Activated naive CD4-positive, alpha-beta T cell treated with anti-CD3 and anti-CD28 coated beads for 36 hours (primary cell): ENCODE measurements at regions of chr6 and their contacts with region 1.

Region 1: GRCh38 chr6:7154341-7155139 is 46.8 kb downstream of the RREB1 start:
- DNase-seq: peak; percentile 36
- H3K4me3 Mint-ChIP-seq: peak overlapping the region; percentile 19
- H3K27ac Mint-ChIP-seq: peak overlapping the region; percentile 65
- H3K4me1 Mint-ChIP-seq: peaks cover 85% of the 10 kb centered on the region
- H3K27me3 Mint-ChIP-seq: no peaks in the 10 kb centered on the region

Region 2: DNA sequence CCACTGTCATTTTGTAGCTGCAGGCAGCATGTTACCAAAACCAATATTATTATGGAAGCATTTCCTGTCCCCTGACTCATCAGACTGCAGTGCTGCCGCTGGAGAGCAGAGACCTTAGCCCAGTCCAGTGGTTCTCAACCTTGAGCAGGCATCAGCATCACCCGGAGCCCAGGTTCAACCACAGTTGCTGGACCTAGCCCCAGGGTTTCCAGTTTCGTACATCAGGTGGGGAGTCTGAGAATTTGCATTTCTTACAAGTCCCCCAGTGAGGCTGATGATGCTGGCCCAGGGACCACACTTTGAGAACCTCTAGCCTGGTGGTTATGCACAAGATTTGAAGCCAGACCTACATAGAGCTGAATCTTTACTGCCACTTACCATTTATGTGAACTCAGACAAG is 518.7 kb before region 1 on chr6:
- CTCF ChIA-PET with region 1: no interaction called
- intact Hi-C with region 1: no loop called
- DNase-seq: no peak
- H3K4me3 Mint-ChIP-seq: no peak overlapping the region
- H3K27ac Mint-ChIP-seq: no peak overlapping the region
- H3K4me1 Mint-ChIP-seq: peaks cover 21% of the 10 kb centered on the region
- H3K27me3 Mint-ChIP-seq: no peaks in the 10 kb centered on the region

Region 3: GRCh38 chr6:7086488-7086887 is 68.1 kb before region 1 on chr6:
- CTCF ChIA-PET with region 1: no interaction called
- intact Hi-C with region 1: loop called (anchors 1 kb)
- DNase-seq: peak; percentile 65
- H3K4me3 Mint-ChIP-seq: peak overlapping the region; percentile 17
- H3K27ac Mint-ChIP-seq: no peak overlapping the region
- H3K4me1 Mint-ChIP-seq: peaks cover 29% of the 10 kb centered on the region
- H3K27me3 Mint-ChIP-seq: no peaks in the 10 kb centered on the region

Region 4: GRCh38 chr6:7112741-7113313 is 41.7 kb before region 1 on chr6:
- CTCF ChIA-PET with region 1: interaction called, 5 read pairs
- intact Hi-C with region 1: loop called (anchors 1 kb)
- DNase-seq: peak; percentile 72
- H3K4me3 Mint-ChIP-seq: peak overlapping the region; percentile 73
- H3K27ac Mint-ChIP-seq: peak overlapping the region; percentile 51
- H3K4me1 Mint-ChIP-seq: peaks cover 74% of the 10 kb centered on the region
- H3K27me3 Mint-ChIP-seq: no peaks in the 10 kb centered on the region

Region 5: GRCh38 chr6:7129358-7129757 is 25.2 kb before region 1 on chr6:
- CTCF ChIA-PET with region 1: no interaction called
- intact Hi-C with region 1: no loop called
- DNase-seq: peak; percentile 27
- H3K4me3 Mint-ChIP-seq: no peak overlapping the region
- H3K27ac Mint-ChIP-seq: peak overlapping the region; percentile 50
- H3K4me1 Mint-ChIP-seq: peaks cover 82% of the 10 kb centered on the region
- H3K27me3 Mint-ChIP-seq: no peaks in the 10 kb centered on the region

Region 6: DNA sequence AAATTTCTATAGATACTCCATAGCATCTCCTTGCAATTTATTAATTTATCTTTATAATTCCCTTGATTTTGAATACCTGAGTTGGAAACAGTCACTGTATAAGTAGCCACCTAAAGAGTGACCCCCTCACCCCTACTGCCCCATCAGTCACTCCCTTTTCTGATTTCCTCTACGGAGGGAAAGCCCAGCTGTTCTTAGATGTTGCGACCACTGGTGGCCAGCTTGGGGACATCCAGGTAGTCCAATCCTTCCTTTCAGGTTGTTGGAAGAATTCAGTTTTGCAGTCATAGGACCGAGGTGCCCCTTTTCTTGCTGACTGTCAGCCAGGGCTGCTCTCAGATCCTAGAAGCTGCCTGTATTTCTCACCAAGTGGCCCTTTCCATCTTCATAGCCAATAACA is 659.2 kb after region 1 on chr6:
- CTCF ChIA-PET with region 1: no interaction called
- intact Hi-C with region 1: no loop called
- DNase-seq: no peak
- H3K4me3 Mint-ChIP-seq: no peak overlapping the region
- H3K27ac Mint-ChIP-seq: no peak overlapping the region
- H3K4me1 Mint-ChIP-seq: no peaks in the 10 kb centered on the region
- H3K27me3 Mint-ChIP-seq: peaks cover 9% of the 10 kb centered on the region